CD8-positive, alpha-beta T cell (primary cell): ENCODE measurements at regions of chrX and their contacts with region 1.

Region 1: GRCh38 chrX:123833387-123833786 is 26.5 kb upstream of the XIAP start:
- DNase-seq: peak; percentile 19 to 71 (median 59)
- ATAC-seq: peak; percentile 97
- H3K4me3 ChIP-seq: no peak overlapping the region
- H3K4me3 Mint-ChIP-seq: no peak overlapping the region
- H3K27ac ChIP-seq: no peak overlapping the region
- H3K27ac Mint-ChIP-seq: no peak overlapping the region
- H3K4me1 ChIP-seq: no peaks in the 10 kb centered on the region
- H3K4me1 Mint-ChIP-seq: no peaks in the 10 kb centered on the region
- H3K27me3 ChIP-seq: no peaks in the 10 kb centered on the region
- H3K27me3 Mint-ChIP-seq: peaks cover 3% of the 10 kb centered on the region
- CTCF ChIP-seq: peak; percentile 61

Region 2: GRCh38 chrX:123884809-123885408 is 51.5 kb after region 1 on chrX:
- CTCF ChIA-PET with region 1: interaction called, 28 read pairs
- POLR2A ChIA-PET with region 1: no interaction called
- intact Hi-C with region 1: loop called (anchors 1 to 2 kb)
- DNase-seq: peak in 6 of 9 experiments; percentile 0 to 73 (median 28)
- ATAC-seq: peak; percentile 34
- H3K4me3 ChIP-seq: no peak overlapping the region
- H3K4me3 Mint-ChIP-seq: no peak overlapping the region
- H3K27ac ChIP-seq: no peak overlapping the region
- H3K27ac Mint-ChIP-seq: no peak overlapping the region
- H3K4me1 ChIP-seq: no peaks in the 10 kb centered on the region
- H3K4me1 Mint-ChIP-seq: peaks cover 12% of the 10 kb centered on the region
- H3K27me3 ChIP-seq: no peaks in the 10 kb centered on the region
- H3K27me3 Mint-ChIP-seq: no peaks in the 10 kb centered on the region
- CTCF ChIP-seq: peak; percentile 49

Region 3: DNA sequence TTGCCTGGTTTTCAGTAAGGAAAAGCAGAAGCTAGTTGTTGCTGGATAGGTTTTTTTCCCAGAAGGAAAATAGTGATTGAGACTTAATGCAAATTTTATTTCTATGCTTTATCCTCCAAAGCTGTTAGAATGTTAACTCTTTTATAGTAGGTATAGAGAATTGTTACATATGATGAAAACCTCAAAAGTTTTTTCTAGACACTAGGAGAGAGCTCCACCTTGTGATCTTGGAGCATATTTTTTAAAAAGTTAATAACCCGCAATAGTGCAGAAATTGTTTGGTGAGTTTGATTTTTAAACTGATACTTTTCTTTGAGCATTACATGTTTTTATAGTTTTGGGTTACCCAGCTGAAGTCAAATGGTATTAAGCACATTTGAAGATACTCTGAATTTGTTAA is 184.6 kb after region 1 on chrX:
- CTCF ChIA-PET with region 1: interaction called, 5 read pairs
- POLR2A ChIA-PET with region 1: no interaction called
- intact Hi-C with region 1: loop called in 1 of 2 experiments (anchors 5 kb)
- DNase-seq: peak in 2 of 9 experiments; percentile 16 to 39
- ATAC-seq: peak; percentile 57
- H3K4me3 ChIP-seq: no peak overlapping the region
- H3K4me3 Mint-ChIP-seq: no peak overlapping the region
- H3K27ac ChIP-seq: no peak overlapping the region
- H3K27ac Mint-ChIP-seq: peak overlapping the region; percentile 41
- H3K4me1 ChIP-seq: peaks cover 12% of the 10 kb centered on the region
- H3K4me1 Mint-ChIP-seq: peaks cover 49% of the 10 kb centered on the region
- H3K27me3 ChIP-seq: no peaks in the 10 kb centered on the region
- H3K27me3 Mint-ChIP-seq: no peaks in the 10 kb centered on the region
- CTCF ChIP-seq: no peak